ENCODE measurements at regions of chr20 and their contacts with region 1.

Region 1: GRCh38 chr20:46022411-46023147 is 6.4 kb upstream of the SLC12A5 start:
- DNase-seq: peak; percentile 69 to 80
- H3K4me3 ChIP-seq: peak overlapping the region; percentile 43
- H3K4me3 Mint-ChIP-seq: peak overlapping the region; percentile 56
- H3K27ac Mint-ChIP-seq: no peak overlapping the region
- H3K4me1 ChIP-seq: no peaks in the 10 kb centered on the region
- H3K4me1 Mint-ChIP-seq: no peaks in the 10 kb centered on the region
- H3K27me3 ChIP-seq: peaks cover under 1% of the 10 kb centered on the region; the same call in 1 of the 2 replicates
- H3K27me3 Mint-ChIP-seq: peaks cover 28% of the 10 kb centered on the region
- CTCF ChIP-seq: peak; percentile 87 to 97

Region 2: GRCh38 chr20:46040902-46041535 is 18.4 kb after region 1 on chr20:
- CTCF ChIA-PET with region 1: interaction called, 5 read pairs
- POLR2A ChIA-PET with region 1: no interaction called
- intact Hi-C with region 1: loop called (anchors 1 kb)
- DNase-seq: peak; percentile 81 to 93
- H3K4me3 ChIP-seq: no peak overlapping the region
- H3K4me3 Mint-ChIP-seq: no peak overlapping the region
- H3K27ac Mint-ChIP-seq: no peak overlapping the region
- H3K4me1 ChIP-seq: no peaks in the 10 kb centered on the region
- H3K4me1 Mint-ChIP-seq: no peaks in the 10 kb centered on the region
- H3K27me3 ChIP-seq: no peaks in the 10 kb centered on the region
- H3K27me3 Mint-ChIP-seq: peaks cover 25% of the 10 kb centered on the region
- CTCF ChIP-seq: no peak

Region 3: GRCh38 chr20:46089417-46090388 is 67.1 kb after region 1 on chr20 and contains the start of gene NCOA5:
- CTCF ChIA-PET with region 1: interaction called, 6 read pairs
- POLR2A ChIA-PET with region 1: no interaction called
- intact Hi-C with region 1: loop called (anchors 2 kb)
- DNase-seq: peak; percentile 99 to 100
- H3K4me3 ChIP-seq: peak within 1 kb of the TSS; percentile 94
- H3K4me3 Mint-ChIP-seq: peak within 1 kb of the TSS; percentile 83
- H3K27ac Mint-ChIP-seq: peak within 1 kb of the TSS; percentile 87
- H3K4me1 ChIP-seq: peaks cover 28% of the 10 kb centered on the region
- H3K4me1 Mint-ChIP-seq: peaks cover 36% of the 10 kb centered on the region
- H3K27me3 ChIP-seq: no peaks in the 10 kb centered on the region
- H3K27me3 Mint-ChIP-seq: peaks cover 3% of the 10 kb centered on the region
- CTCF ChIP-seq: peak; percentile 48 to 52
- total RNA-seq, gene NCOA5: 52.5 and 53.3 TPM in 2 replicates

Measured in Caco-2 (cell line).